Cardiac septum (tissue), 1 donor: ENCODE measurements at regions of chr3 and their contacts with region 1.

Region 1: GRCh38 chr3:27712136-27713077 is 9.7 kb downstream of the EOMES start:
- DNase-seq: peak; percentile 86

Region 2: GRCh38 chr3:27312044-27312668 is 400.3 kb before region 1 on chr3:
- intact Hi-C with region 1: no loop called
- DNase-seq: no peak

Region 3: DNA sequence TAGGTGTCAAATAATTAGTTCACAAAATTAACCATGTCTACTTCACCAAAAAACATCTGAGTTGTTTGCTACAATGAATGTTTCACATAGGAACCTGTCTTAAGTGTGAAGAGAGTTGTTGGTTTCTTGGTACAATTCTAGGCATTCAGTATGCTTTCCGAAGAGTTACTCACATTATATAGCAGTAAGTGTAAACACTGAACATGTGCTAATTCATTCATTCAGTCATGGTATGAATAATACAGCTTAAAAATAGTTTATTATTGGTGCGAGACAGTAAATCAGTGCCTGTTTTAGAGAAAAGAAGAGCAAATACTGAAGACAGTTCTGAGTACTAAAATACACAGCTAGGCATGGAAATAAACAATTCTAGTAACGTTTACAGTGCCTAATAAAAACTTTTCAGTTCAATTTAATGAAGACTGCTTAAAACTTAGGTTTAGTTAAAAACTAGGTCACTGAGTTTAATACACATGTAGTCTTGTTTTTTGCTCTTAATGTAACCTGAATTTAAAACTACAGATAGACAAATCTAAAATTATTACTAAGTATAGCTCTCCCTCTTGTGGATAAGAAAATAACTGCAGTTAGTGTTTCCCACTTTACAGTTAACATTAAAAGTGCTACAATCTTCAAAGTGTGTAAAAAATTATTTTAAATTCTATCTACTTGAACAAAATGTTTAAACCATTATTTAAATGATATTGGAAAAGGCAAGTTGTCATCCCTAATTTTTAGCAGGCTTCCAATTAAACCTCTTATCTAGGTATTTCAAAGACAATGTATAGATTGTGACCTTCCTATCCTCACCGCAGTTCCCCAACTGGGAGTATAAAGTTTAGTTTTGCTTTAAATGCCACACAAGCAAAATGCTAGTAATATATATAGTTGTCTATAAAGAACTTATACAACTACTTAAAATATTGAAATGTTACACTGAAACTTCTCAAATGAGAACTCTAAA is 616.1 kb after region 1 on chr3:
- intact Hi-C with region 1: loop called (anchors 5 kb)
- DNase-seq: no peak